ENCODE measurements at regions of chr10 and their contacts with region 1.

Region 1: DNA sequence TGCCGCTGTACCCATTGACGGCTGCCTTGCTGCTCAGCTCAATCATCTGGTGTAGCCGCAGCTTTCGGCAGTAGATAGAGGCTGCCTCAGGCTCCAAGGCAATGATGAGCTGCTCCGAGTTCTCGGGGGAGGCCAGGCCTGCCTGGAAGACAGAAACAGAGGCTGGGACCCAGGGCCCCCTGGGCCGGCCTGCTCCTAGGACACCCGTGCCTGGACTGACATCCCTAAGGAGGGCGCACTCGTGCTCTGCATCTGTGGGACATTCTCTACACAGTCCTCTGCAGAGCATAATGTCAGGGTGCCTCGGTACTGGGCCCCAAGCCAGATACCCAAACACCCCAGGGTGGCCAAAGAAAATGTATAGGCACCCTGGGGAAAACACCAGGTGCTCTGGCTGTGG is 58.5 kb downstream of the HSPA12A start:
- DNase-seq: no peak
- H3K4me3 Mint-ChIP-seq: no peak overlapping the region
- H3K27ac Mint-ChIP-seq: no peak overlapping the region
- H3K4me1 Mint-ChIP-seq: peaks cover 1% of the 10 kb centered on the region
- H3K27me3 Mint-ChIP-seq: peaks cover 5% of the 10 kb centered on the region

Region 2: DNA sequence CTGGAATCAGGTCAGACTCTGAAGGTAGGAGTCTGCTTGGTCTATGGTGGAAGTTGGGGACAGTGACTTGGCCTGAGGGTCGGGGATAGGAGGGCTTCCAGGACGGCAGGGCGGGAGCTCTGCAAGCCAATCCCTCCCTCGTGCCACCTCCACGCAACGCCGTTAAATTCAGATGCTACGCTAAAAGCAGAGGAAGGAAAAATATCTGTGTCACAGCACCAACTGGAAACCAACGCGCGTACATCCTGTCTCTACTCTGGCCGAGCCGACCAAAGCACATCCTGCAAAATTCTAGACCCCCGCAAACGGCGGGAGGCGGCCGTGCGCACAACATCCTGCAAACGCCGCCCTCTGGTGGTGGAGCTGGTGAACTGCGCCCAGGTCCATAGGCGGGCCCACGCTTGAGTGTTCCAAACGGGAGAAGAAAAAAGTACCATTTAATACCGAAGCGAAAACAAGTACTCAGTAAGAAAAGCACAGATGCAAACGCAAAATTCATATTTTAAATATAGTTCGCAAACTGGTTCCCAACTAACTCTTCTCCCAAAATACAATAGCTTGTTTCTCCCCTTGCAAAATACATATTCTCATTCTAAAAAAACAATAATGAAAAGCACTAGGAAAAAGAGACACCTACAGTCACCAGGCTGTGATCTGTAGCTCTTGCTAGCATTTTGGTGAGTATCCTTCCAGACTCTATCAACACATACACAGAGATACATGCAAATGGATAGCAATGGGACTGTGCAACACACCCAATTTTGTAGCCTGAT is 104.3 kb after region 1 on chr10:
- CTCF ChIA-PET with region 1: interaction called, 18 read pairs
- POLR2A ChIA-PET with region 1: no interaction called
- DNase-seq: peak; percentile 81
- H3K4me3 Mint-ChIP-seq: peak overlapping the region; percentile 23
- H3K27ac Mint-ChIP-seq: peak overlapping the region; percentile 75
- H3K4me1 Mint-ChIP-seq: peaks cover 14% of the 10 kb centered on the region
- H3K27me3 Mint-ChIP-seq: peaks cover 8% of the 10 kb centered on the region